Transverse colon (tissue), 4 donors: ENCODE measurements at regions of chr14 and their contacts with region 1.

Region 1: GRCh38 chr14:20682435-20683124 is 1.8 kb upstream of the RNASE4 start:
- DNase-seq: peak; percentile 88
- H3K4me3 ChIP-seq: peak overlapping the region; percentile 61 to 87 (median 69)
- H3K27ac ChIP-seq: peak overlapping the region; percentile 99 to 100 (median 100)
- H3K4me1 ChIP-seq: peaks cover 17 to 51% (median 35%) of the 10 kb centered on the region in 4 donors
- H3K27me3 ChIP-seq: no peaks in the 10 kb centered on the region
- CTCF ChIP-seq: no peak
- EP300 ChIP-seq: no peak
- POLR2A ChIP-seq: peak; percentile 95

Region 2: DNA sequence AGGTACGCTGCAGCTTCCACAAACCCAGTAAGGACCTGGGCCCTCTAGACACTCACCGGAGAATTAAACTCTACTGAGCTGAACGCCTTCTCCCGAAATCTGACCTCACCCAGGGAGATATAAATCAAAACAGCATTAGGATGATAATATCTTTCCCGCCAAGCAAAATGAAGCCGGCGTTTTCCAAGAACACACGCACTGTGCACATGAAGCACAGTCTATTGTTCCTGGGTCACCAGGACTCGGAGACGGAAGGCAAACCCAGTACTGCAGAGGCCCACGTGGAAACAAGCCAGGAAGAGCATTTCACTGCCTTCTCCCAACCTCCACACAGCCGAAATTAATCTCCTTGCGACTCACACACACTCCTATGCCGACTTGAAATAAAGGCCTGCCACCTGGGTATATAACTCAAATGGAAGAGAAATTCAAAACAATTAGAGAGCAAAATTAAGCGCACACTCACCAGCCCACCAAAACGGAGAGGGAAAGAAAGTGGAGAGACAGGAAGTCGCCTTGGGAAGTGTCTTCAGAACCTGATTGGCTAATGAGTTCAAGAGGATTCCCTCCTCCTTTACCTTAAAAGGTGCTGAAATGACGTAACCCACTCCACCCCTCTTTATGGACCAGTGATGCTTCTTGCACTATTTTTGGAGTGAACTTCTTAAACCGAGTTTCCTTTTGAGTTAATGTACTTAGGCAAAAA is 349.6 kb before region 1 on chr14 and contains the start of gene CCNB1IP1:
- in situ Hi-C with region 1: loop called in 3 of 4 experiments (anchors 10 to 25 kb)
- intact Hi-C with region 1: no loop called
- DNase-seq: peak; percentile 64
- H3K4me3 ChIP-seq: peak within 1 kb of the TSS; percentile 48 to 69 (median 60)
- H3K27ac ChIP-seq: peak within 1 kb of the TSS; percentile 89 to 95 (median 93)
- H3K4me1 ChIP-seq: peaks cover 5 to 24% (median 7%) of the 10 kb centered on the region in 4 donors
- H3K27me3 ChIP-seq: no peaks in the 10 kb centered on the region
- CTCF ChIP-seq: no peak
- EP300 ChIP-seq: no peak
- POLR2A ChIP-seq: peak; percentile 77
- total RNA-seq, gene CCNB1IP1: 11.9 to 38.3 (median 23.9) TPM

Region 3: GRCh38 chr14:20365928-20366327 is 316.7 kb before region 1 on chr14:
- in situ Hi-C with region 1: no loop called
- intact Hi-C with region 1: no loop called
- DNase-seq: no peak
- H3K4me3 ChIP-seq: no peak overlapping the region
- H3K27ac ChIP-seq: no peak overlapping the region
- H3K4me1 ChIP-seq: no peaks in the 10 kb centered on the region
- H3K27me3 ChIP-seq: no peaks in the 10 kb centered on the region
- CTCF ChIP-seq: no peak
- EP300 ChIP-seq: no peak
- POLR2A ChIP-seq: no peak

Region 4: GRCh38 chr14:20454516-20455354 is 227.8 kb before region 1 on chr14 and contains the starts of genes APEX1 and OSGEP:
- in situ Hi-C with region 1: loop called in 1 of 4 experiments (anchors 25 kb)
- intact Hi-C with region 1: no loop called
- DNase-seq: peak; percentile 99
- H3K4me3 ChIP-seq: peak within 1 kb of the TSS; percentile 59 to 76 (median 72)
- H3K27ac ChIP-seq: peak within 1 kb of the TSS; percentile 94 to 96 (median 94)
- H3K4me1 ChIP-seq: peaks cover 16 to 35% (median 24%) of the 10 kb centered on the region in 4 donors
- H3K27me3 ChIP-seq: no peaks in the 10 kb centered on the region
- CTCF ChIP-seq: peak in 1 of 5 experiments; percentile 15
- EP300 ChIP-seq: no peak
- POLR2A ChIP-seq: peak; percentile 93
- total RNA-seq, gene APEX1: 108 to 120 (median 111) TPM
- total RNA-seq, gene OSGEP: 26.7 to 146 (median 64.7) TPM

Region 5: GRCh38 chr14:20989572-20990551 is 307.3 kb after region 1 on chr14 and contains the start of gene METTL17:
- in situ Hi-C with region 1: loop called in 1 of 4 experiments (anchors 25 kb)
- intact Hi-C with region 1: no loop called
- DNase-seq: peak; percentile 92
- H3K4me3 ChIP-seq: peak within 1 kb of the TSS; percentile 71 to 89 (median 78)
- H3K27ac ChIP-seq: peak within 1 kb of the TSS; percentile 84 to 91 (median 88)
- H3K4me1 ChIP-seq: peaks cover 6 to 29% (median 26%) of the 10 kb centered on the region in 4 donors
- H3K27me3 ChIP-seq: no peaks in the 10 kb centered on the region
- CTCF ChIP-seq: peak; percentile 12 to 69 (median 27)
- EP300 ChIP-seq: no peak
- POLR2A ChIP-seq: peak; percentile 77
- total RNA-seq, gene METTL17: 74.8 to 124 (median 108) TPM